ENCODE measurements at regions of chr13 and their contacts with region 1.

Region 1: GRCh38 chr13:77316430-77316829 is 10.5 kb downstream of the MYCBP2 start:
- DNase-seq: no peak
- ATAC-seq: no peak
- H3K4me3 ChIP-seq: no peak overlapping the region
- H3K4me3 Mint-ChIP-seq: peak overlapping the region; percentile 26
- H3K27ac ChIP-seq: no peak overlapping the region
- H3K27ac Mint-ChIP-seq: peak overlapping the region; percentile 66
- H3K4me1 ChIP-seq: peaks cover 68% of the 10 kb centered on the region
- H3K4me1 Mint-ChIP-seq: peaks cover 88% of the 10 kb centered on the region
- H3K27me3 ChIP-seq: no peaks in the 10 kb centered on the region
- H3K27me3 Mint-ChIP-seq: no peaks in the 10 kb centered on the region
- CTCF ChIP-seq: no peak

Region 2: DNA sequence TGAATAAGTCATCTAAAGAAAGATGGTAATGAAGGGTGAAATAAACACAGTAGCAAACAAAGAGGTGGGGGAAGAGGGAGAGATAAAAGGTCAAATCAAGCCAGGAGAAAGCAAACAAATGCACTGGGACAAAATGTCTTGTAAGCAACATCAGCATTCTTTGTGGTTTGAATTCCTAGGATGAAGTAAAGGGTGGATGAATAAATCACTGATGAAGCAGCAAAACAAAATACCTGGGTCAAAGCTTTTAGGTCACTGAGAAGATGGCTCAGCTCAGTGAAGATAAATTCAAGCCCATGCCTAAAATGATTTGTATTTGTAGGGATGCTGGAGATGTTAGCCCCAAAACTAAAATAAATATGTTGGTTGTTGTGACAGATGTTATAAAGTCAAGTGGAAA is 202.9 kb before region 1 on chr13:
- CTCF ChIA-PET with region 1: no interaction called
- POLR2A ChIA-PET with region 1: no interaction called
- intact Hi-C with region 1: no loop called
- DNase-seq: no peak
- ATAC-seq: no peak
- H3K4me3 ChIP-seq: no peak overlapping the region
- H3K4me3 Mint-ChIP-seq: no peak overlapping the region
- H3K27ac ChIP-seq: no peak overlapping the region
- H3K27ac Mint-ChIP-seq: no peak overlapping the region
- H3K4me1 ChIP-seq: no peaks in the 10 kb centered on the region
- H3K4me1 Mint-ChIP-seq: no peaks in the 10 kb centered on the region
- H3K27me3 ChIP-seq: no peaks in the 10 kb centered on the region
- H3K27me3 Mint-ChIP-seq: no peaks in the 10 kb centered on the region
- CTCF ChIP-seq: no peak

Region 3: DNA sequence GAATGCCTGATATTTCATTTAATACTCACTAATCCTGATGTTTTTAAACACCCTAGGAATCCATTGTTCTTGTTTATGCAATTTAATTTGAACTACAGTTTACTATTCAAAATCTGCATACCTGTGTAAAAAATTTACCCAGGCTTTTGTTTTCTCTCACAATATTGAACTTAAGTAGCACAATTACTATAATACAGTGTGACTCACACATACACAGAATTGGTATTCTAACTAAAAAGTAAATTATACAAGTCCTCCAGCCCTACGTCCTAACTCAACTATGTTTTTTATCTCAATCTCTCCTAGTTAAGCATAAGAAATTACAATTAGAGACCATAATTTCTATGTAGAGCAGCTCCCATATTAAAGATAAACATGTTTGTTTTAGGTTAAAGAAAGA is 31.3 kb before region 1 on chr13:
- CTCF ChIA-PET with region 1: no interaction called
- POLR2A ChIA-PET with region 1: no interaction called
- intact Hi-C with region 1: loop called in 1 of 2 experiments (anchors 5 kb)
- DNase-seq: no peak
- ATAC-seq: no peak
- H3K4me3 ChIP-seq: no peak overlapping the region
- H3K4me3 Mint-ChIP-seq: no peak overlapping the region
- H3K27ac ChIP-seq: no peak overlapping the region
- H3K27ac Mint-ChIP-seq: no peak overlapping the region
- H3K4me1 ChIP-seq: no peaks in the 10 kb centered on the region
- H3K4me1 Mint-ChIP-seq: peaks cover 24% of the 10 kb centered on the region
- H3K27me3 ChIP-seq: no peaks in the 10 kb centered on the region
- H3K27me3 Mint-ChIP-seq: no peaks in the 10 kb centered on the region
- CTCF ChIP-seq: no peak

Region 4: DNA sequence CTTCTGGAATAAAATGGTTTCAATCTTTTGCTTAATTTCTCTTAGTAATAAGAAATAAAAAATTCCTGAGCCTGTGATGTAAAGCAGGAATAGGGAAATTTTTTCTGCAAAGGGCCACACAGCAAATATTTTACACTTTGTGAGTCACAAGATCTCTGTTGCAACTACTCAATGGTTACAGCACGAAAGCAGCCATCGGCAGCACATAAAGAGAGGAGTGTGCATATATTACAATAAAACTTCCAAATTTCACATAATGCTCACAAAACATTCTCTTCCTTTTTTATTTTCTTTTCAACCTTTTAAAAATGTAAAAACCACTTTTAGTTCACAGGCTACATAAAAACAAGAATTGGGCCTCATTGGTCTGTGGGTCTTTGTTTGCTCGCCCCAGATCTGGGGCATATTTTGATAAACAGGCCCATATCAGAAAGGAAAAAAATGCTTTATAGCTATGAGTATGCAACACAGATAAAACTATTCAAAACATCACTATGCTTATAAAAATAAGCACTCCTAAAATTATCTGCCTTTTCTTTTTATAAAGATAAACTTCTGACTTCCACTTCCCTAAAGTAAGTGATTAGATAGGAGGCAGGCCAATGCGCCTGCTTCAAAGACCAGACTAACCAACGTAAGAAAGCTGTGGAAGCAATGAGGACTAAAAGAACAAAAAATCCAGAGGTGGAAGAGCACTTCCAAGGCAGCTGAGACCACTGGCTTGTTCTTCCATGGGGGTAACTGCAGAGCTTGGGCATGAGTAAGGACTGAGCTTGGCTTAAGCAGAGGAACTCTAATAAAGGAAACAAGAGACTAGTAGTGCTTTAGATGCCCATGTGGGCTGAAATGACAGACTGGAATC is 16.0 kb before region 1 on chr13:
- CTCF ChIA-PET with region 1: interaction called, 5 read pairs
- POLR2A ChIA-PET with region 1: interaction called, 3 read pairs
- intact Hi-C with region 1: loop called (anchors 1 to 2 kb)
- DNase-seq: no peak
- ATAC-seq: no peak
- H3K4me3 ChIP-seq: no peak overlapping the region
- H3K4me3 Mint-ChIP-seq: no peak overlapping the region
- H3K27ac ChIP-seq: no peak overlapping the region
- H3K27ac Mint-ChIP-seq: no peak overlapping the region
- H3K4me1 ChIP-seq: peaks cover 40% of the 10 kb centered on the region
- H3K4me1 Mint-ChIP-seq: peaks cover 70% of the 10 kb centered on the region
- H3K27me3 ChIP-seq: no peaks in the 10 kb centered on the region
- H3K27me3 Mint-ChIP-seq: no peaks in the 10 kb centered on the region
- CTCF ChIP-seq: no peak

Region 5: DNA sequence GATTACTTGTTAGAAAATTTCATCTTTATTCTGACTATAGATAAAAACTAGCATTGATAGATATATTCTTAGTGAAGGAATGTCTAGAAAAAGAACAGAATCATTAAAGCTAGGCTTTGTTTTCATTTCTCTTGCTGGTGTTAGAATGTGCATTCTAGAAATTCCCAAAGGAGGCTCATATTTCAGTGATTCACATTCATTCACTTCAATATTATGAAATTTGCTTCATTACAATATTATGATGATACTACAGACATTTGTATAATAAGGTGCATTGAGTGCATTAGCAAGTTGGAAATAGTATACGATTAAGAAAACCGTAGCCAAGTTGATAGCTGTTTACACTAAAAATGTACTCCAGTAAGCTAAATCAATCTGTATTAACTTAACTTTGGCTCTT is 81.2 kb after region 1 on chr13:
- CTCF ChIA-PET with region 1: no interaction called
- POLR2A ChIA-PET with region 1: no interaction called
- intact Hi-C with region 1: no loop called
- DNase-seq: no peak
- ATAC-seq: no peak
- H3K4me3 ChIP-seq: no peak overlapping the region
- H3K4me3 Mint-ChIP-seq: no peak overlapping the region
- H3K27ac ChIP-seq: no peak overlapping the region
- H3K27ac Mint-ChIP-seq: no peak overlapping the region
- H3K4me1 ChIP-seq: peaks cover 10% of the 10 kb centered on the region
- H3K4me1 Mint-ChIP-seq: peaks cover 11% of the 10 kb centered on the region
- H3K27me3 ChIP-seq: no peaks in the 10 kb centered on the region
- H3K27me3 Mint-ChIP-seq: no peaks in the 10 kb centered on the region
- CTCF ChIP-seq: no peak

Region 6: GRCh38 chr13:77443511-77443910 is 127.1 kb after region 1 on chr13:
- CTCF ChIA-PET with region 1: no interaction called
- POLR2A ChIA-PET with region 1: no interaction called
- intact Hi-C with region 1: no loop called
- DNase-seq: no peak
- ATAC-seq: no peak
- H3K4me3 ChIP-seq: no peak overlapping the region
- H3K4me3 Mint-ChIP-seq: no peak overlapping the region
- H3K27ac ChIP-seq: no peak overlapping the region
- H3K27ac Mint-ChIP-seq: no peak overlapping the region
- H3K4me1 ChIP-seq: no peaks in the 10 kb centered on the region
- H3K4me1 Mint-ChIP-seq: no peaks in the 10 kb centered on the region
- H3K27me3 ChIP-seq: no peaks in the 10 kb centered on the region
- H3K27me3 Mint-ChIP-seq: peaks cover 9% of the 10 kb centered on the region
- CTCF ChIP-seq: no peak

Region 7: GRCh38 chr13:77966671-77967070 is 650.2 kb after region 1 on chr13:
- CTCF ChIA-PET with region 1: no interaction called
- POLR2A ChIA-PET with region 1: no interaction called
- intact Hi-C with region 1: no loop called
- DNase-seq: no peak
- ATAC-seq: no peak
- H3K4me3 ChIP-seq: no peak overlapping the region
- H3K4me3 Mint-ChIP-seq: no peak overlapping the region
- H3K27ac ChIP-seq: no peak overlapping the region
- H3K27ac Mint-ChIP-seq: no peak overlapping the region
- H3K4me1 ChIP-seq: no peaks in the 10 kb centered on the region
- H3K4me1 Mint-ChIP-seq: no peaks in the 10 kb centered on the region
- H3K27me3 ChIP-seq: no peaks in the 10 kb centered on the region
- H3K27me3 Mint-ChIP-seq: no peaks in the 10 kb centered on the region
- CTCF ChIP-seq: no peak

Measured in CD8-positive, alpha-beta T cell (primary cell).